Activated CD4-positive, alpha-beta T cell treated with anti-CD3 and anti-CD28 coated beads, Interleukin-2, amount 10 ng/mL, durations not matched to agents 7 days and 5 days (primary cell): ENCODE measurements at regions of chr11 and their contacts with region 1.

Region 1: GRCh38 chr11:61797263-61797944 is 4.7 kb downstream of the FEN1 start:
- DNase-seq: peak; percentile 86
- H3K4me3 Mint-ChIP-seq: no peak overlapping the region
- H3K27ac Mint-ChIP-seq: no peak overlapping the region
- H3K4me1 Mint-ChIP-seq: peaks cover 42% of the 10 kb centered on the region
- H3K27me3 Mint-ChIP-seq: no peaks in the 10 kb centered on the region

Region 2: GRCh38 chr11:61816736-61817455 is 19.5 kb after region 1 on chr11 and contains the start of gene FADS1:
- CTCF ChIA-PET with region 1: interaction called, 57 read pairs
- POLR2A ChIA-PET with region 1: interaction called, 7 read pairs
- DNase-seq: peak; percentile 85
- H3K4me3 Mint-ChIP-seq: peak within 1 kb of the TSS; percentile 93
- H3K27ac Mint-ChIP-seq: peak within 1 kb of the TSS; percentile 94
- H3K4me1 Mint-ChIP-seq: peaks cover 17% of the 10 kb centered on the region
- H3K27me3 Mint-ChIP-seq: peaks cover 22% of the 10 kb centered on the region
- total RNA-seq, gene FADS1: 25.7 to 27.1 TPM

Region 3: DNA sequence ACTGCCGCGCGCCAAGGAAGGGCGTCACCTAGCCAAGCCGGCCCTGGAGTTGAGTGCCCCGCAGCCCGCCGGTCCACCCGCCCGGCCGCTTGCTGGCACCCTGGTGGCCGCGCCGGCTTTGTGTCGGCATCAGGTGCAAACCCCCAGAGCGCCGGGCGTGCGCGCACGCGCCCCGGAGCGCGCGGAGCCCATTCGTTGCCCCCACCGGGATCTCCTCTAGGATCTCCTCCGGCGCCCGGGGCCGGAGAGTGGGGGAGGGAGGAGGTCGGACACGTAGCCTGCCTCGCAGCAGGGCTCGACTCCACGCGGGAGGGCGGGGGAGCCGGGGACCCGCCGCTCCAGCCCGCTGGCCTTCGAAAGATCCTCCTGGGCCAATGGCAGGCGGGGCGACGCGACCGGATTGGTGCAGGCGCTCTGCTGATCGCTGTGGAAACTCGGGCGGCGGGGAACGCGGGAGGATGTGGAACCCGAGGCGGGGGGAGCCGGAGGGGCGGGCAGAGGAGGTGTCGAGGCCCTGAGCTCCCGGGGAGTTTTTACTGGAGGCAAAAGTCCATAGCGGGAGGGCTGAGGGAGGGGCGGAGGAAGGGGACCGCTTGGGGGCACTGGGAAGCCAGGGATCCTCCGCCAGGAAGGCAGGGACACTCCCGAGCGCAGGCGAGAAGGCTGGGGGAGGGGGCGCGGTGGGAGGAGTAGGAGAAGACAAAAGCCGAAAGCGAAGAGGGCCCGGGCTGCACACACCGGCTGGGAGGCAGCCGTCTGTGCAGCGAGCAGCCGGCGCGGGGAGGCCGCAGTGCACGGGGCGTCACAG is 30.4 kb after region 1 on chr11 and contains the start of gene FADS2:
- CTCF ChIA-PET with region 1: interaction called, 12 read pairs
- POLR2A ChIA-PET with region 1: interaction called, 3 read pairs
- DNase-seq: peak; percentile 91
- H3K4me3 Mint-ChIP-seq: peak within 1 kb of the TSS; percentile 85
- H3K27ac Mint-ChIP-seq: peak within 1 kb of the TSS; percentile 93
- H3K4me1 Mint-ChIP-seq: peaks cover 41% of the 10 kb centered on the region
- H3K27me3 Mint-ChIP-seq: peaks cover 6% of the 10 kb centered on the region
- total RNA-seq, gene FADS2: 128 to 135 TPM

Region 4: DNA sequence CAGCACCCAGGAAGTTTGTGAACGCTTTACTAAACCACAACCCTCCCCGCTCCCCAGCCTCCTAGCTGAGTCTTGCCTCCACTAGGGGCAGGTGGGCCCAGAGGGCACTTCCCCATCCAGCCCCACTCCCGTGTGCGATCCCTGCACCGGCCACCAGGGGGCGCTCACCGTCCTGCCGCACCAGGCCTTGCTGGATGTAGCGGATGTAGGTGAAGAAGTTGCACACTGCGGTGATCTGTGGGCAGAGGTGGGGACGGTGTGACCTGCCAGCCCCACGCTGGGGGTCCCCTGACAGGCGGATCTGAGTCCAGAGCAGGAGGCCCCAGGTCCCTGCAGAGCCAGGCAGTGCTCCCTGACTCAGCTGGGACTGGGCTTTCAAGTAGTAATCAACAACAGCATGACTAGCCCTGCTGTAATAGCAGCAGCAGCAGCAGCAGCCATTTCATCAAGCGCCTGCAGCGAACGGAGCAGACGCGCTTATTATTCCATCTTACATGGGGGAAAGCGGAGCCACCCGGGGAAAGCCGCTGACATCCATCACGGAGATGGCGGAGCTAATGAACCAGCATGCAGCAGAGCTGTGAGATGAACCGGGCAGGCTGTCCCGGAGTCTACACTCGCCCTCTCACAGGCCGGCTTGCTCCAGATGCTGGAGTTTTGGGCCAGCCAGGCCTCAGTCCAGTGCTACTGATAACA is 101.9 kb after region 1 on chr11:
- CTCF ChIA-PET with region 1: interaction called, 19 read pairs
- POLR2A ChIA-PET with region 1: no interaction called
- DNase-seq: peak; percentile 92
- H3K4me3 Mint-ChIP-seq: no peak overlapping the region
- H3K27ac Mint-ChIP-seq: peak overlapping the region; percentile 43
- H3K4me1 Mint-ChIP-seq: peaks cover 6% of the 10 kb centered on the region
- H3K27me3 Mint-ChIP-seq: no peaks in the 10 kb centered on the region